ENCODE measurements at regions of chr11 and their contacts with region 1.

Region 1: GRCh38 chr11:59560702-59561469 is 49.5 kb downstream of the OR4D9 start:
- DNase-seq: peak; percentile 92 to 95
- ATAC-seq: peak; percentile 92
- H3K4me3 ChIP-seq: peak overlapping the region; percentile 85 to 91
- H3K27ac ChIP-seq: peak overlapping the region; percentile 72 to 83
- H3K4me1 ChIP-seq: no peaks in the 10 kb centered on the region
- H3K27me3 ChIP-seq: no peaks in the 10 kb centered on the region

Region 2: DNA sequence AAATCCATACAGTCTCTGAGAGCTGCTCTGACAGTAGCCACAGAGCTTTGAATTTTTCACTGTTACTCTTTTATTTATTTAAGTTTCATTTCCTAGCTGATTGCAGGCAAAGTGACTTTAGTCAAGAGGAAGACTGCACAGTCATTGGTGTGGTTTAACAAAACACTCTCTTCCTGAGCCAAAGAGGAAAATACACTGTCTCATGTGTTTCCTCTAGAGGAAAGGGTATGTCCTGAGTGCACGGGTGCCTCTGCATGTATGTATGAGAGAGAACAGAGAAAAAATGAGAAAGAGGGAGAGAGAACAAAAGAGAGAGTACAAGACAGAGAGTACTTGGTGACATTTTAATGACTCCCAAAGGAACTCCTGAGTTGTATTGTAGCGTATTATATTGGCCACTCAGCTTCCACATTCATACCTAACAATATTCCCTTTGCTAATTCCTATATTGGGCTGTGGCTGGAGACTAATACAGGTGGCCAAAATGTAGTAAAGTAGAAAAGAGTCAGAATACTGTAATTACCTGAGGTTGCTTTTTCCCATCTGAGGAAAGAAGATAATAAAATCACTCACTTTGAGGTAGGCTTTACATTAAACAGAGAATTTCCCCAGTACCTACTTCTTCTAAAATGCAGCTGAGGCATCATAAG is 49.8 kb before region 1 on chr11 and contains the start of gene OR4D9:
- intact Hi-C with region 1: no loop called
- DNase-seq: no peak
- ATAC-seq: no peak
- H3K4me3 ChIP-seq: no peak within 1 kb of the TSS
- H3K27ac ChIP-seq: no peak within 1 kb of the TSS
- H3K4me1 ChIP-seq: no peaks in the 10 kb centered on the region
- H3K27me3 ChIP-seq: peaks cover 0 to 3% of the 10 kb centered on the region in 2 donors
- total RNA-seq, gene OR4D9: not detected

Region 3: GRCh38 chr11:59550368-59550841 is 10.5 kb before region 1 on chr11:
- intact Hi-C with region 1: loop called in 1 of 2 experiments (anchors 1 kb)
- DNase-seq: peak; percentile 81 to 91
- ATAC-seq: peak; percentile 91
- H3K4me3 ChIP-seq: peak overlapping the region; percentile 83 to 93
- H3K27ac ChIP-seq: peak overlapping the region in 1 of 2 donors; percentile 77
- H3K4me1 ChIP-seq: no peaks in the 10 kb centered on the region
- H3K27me3 ChIP-seq: no peaks in the 10 kb centered on the region

Region 4: GRCh38 chr11:59615637-59616395 is 54.9 kb after region 1 on chr11 and contains the start of gene OSBP:
- intact Hi-C with region 1: loop called in 1 of 2 experiments (anchors 5 kb)
- DNase-seq: peak; percentile 99 to 100
- ATAC-seq: peak; percentile 97
- H3K4me3 ChIP-seq: peak within 1 kb of the TSS; percentile 58 to 68
- H3K27ac ChIP-seq: peak within 1 kb of the TSS; percentile 89 to 93
- H3K4me1 ChIP-seq: peaks cover 1 to 3% of the 10 kb centered on the region in 2 donors
- H3K27me3 ChIP-seq: no peaks in the 10 kb centered on the region
- total RNA-seq, gene OSBP: 40.4 to 42.4 TPM